Caco-2 (cell line): ENCODE measurements at regions of chr16 and their contacts with region 1.

Region 1: GRCh38 chr16:85891033-85891772 is 7.8 kb upstream of the IRF8 start:
- DNase-seq: peak; percentile 88 to 90
- H3K4me3 ChIP-seq: no peak overlapping the region
- H3K4me3 Mint-ChIP-seq: peak overlapping the region; percentile 58
- H3K27ac Mint-ChIP-seq: peak overlapping the region; percentile 77
- H3K4me1 ChIP-seq: peaks cover 50% of the 10 kb centered on the region
- H3K4me1 Mint-ChIP-seq: peaks cover 56% of the 10 kb centered on the region
- H3K27me3 ChIP-seq: no peaks in the 10 kb centered on the region
- H3K27me3 Mint-ChIP-seq: no peaks in the 10 kb centered on the region
- CTCF ChIP-seq: no peak

Region 2: DNA sequence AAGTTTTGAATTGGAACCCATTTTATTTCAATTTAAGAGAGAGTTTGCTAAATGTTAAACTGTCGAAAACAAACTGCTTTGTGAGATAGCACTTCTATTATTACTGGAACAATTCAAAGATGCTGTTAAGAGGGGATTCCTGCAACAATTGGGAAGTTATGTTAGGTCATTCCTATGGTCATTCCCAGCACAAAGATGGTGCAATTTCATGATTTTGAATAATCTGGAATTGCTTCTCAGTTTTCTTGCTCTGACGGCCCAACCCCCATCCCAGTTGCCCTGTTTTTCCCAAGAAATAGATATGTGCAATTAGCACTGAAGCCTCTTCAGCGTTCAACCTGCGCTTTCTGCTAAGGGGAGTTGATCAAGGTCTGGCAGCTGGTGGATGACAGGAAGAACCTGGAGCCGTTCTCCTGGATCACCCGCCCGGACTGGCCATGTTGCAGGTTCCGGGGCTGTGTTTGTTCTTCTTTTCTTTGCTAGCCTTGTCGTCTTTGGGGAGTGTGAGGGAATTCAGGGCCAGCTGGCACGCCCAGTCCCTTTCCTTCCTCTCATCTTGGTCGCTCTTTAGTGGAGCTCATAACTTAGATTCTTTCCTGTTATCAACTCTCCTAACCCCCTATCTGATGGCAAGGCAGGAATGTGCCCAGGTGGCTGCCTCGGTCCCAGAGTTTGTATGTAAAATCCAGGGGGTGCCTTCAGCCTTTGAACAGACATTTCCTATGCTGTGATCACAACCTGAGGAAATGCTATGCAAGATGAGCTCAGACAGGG is 21.2 kb before region 1 on chr16:
- CTCF ChIA-PET with region 1: interaction called, 8 read pairs
- POLR2A ChIA-PET with region 1: interaction called, 3 read pairs
- intact Hi-C with region 1: loop called (anchors 1 kb)
- DNase-seq: peak; percentile 78 to 80
- H3K4me3 ChIP-seq: peak overlapping the region; percentile 16; the same call in 1 of the 2 replicates
- H3K4me3 Mint-ChIP-seq: peak overlapping the region; percentile 86
- H3K27ac Mint-ChIP-seq: peak overlapping the region; percentile 99
- H3K4me1 ChIP-seq: peaks cover 13% of the 10 kb centered on the region
- H3K4me1 Mint-ChIP-seq: peaks cover 28% of the 10 kb centered on the region
- H3K27me3 ChIP-seq: no peaks in the 10 kb centered on the region
- H3K27me3 Mint-ChIP-seq: no peaks in the 10 kb centered on the region
- CTCF ChIP-seq: no peak

Region 3: GRCh38 chr16:85986931-85987749 is 95.9 kb after region 1 on chr16:
- CTCF ChIA-PET with region 1: interaction called, 3 read pairs
- POLR2A ChIA-PET with region 1: no interaction called
- intact Hi-C with region 1: loop called (anchors 2 kb)
- DNase-seq: peak; percentile 52 to 56
- H3K4me3 ChIP-seq: no peak overlapping the region
- H3K4me3 Mint-ChIP-seq: no peak overlapping the region
- H3K27ac Mint-ChIP-seq: no peak overlapping the region
- H3K4me1 ChIP-seq: peaks cover 29% of the 10 kb centered on the region
- H3K4me1 Mint-ChIP-seq: peaks cover 24% of the 10 kb centered on the region
- H3K27me3 ChIP-seq: no peaks in the 10 kb centered on the region
- H3K27me3 Mint-ChIP-seq: no peaks in the 10 kb centered on the region
- CTCF ChIP-seq: peak; percentile 47 to 87